Activated T-helper 2 cell treated with anti-CD3 and anti-CD28 coated beads, Interferon-gamma antibody, Interleukin-2, Interleukin-4, amounts not matched to agents 10 μg/mL and 5 μg/mL and 100 μg/mL, durations not matched to agents 14 hours and 24 hours and 36 hours (primary cell): ENCODE measurements at regions of chr11 and their contacts with region 1.

Region 1: GRCh38 chr11:73184953-73185671 is 33.0 kb upstream of the P2RY2 start:
- DNase-seq: peak; percentile 46
- H3K4me3 Mint-ChIP-seq: no peak overlapping the region
- H3K27ac Mint-ChIP-seq: no peak overlapping the region
- H3K4me1 Mint-ChIP-seq: peaks cover 5% of the 10 kb centered on the region
- H3K27me3 Mint-ChIP-seq: peaks cover 21% of the 10 kb centered on the region

Region 2: DNA sequence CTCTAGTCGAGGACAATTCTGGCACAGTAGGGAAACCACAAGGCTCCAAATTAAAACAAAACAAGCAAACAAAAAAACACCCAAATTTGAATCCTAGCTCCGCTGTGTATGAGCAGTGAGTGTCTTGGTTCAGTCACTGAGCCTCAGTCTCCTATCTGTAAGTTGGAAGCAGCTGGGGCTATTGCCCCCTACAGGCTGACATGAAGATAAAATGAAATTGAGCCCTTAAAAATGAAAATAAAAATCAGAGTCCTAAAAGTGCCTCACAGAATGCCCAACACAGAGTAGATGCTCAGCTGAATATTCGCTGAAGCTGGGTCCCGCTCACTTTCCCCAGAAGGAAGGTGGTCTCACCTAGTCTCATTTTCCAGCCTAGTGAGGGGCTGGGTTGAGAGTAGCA is 576.1 kb before region 1 on chr11:
- intact Hi-C with region 1: no loop called
- DNase-seq: no peak
- H3K4me3 Mint-ChIP-seq: no peak overlapping the region
- H3K27ac Mint-ChIP-seq: no peak overlapping the region
- H3K4me1 Mint-ChIP-seq: peaks cover 5% of the 10 kb centered on the region
- H3K27me3 Mint-ChIP-seq: peaks cover 31% of the 10 kb centered on the region

Region 3: DNA sequence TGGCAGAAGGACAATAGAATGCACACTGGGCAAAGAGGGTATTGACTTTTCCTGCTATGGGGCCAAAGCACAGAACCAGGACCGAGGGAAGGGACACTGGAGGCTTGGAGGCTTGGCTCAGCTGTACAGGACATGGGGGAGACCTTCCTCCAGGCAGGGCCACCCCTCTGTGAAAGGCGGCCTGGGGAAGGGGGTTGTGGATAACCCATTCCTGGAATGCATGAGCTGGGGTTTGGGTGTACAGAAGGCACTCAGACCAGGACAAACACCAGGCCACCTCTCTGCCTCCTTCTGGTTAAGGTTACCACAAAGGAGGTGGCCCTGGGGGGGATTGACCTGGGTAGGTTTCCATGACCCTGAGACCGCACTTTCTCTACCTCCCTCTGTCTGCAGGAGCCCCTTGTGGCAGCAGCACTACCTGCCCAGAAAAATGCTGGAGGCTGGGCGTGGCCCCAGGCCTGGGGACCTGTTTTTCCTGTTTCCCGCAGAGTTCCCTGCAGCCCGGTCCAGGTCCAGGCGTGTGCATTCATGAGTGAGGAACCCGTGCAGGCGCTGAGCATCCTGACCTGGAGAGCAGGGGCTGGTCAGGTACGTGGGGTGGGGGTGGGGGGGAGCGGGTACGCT is 42.6 kb after region 1 on chr11:
- intact Hi-C with region 1: no loop called
- DNase-seq: no peak
- H3K4me3 Mint-ChIP-seq: no peak overlapping the region
- H3K27ac Mint-ChIP-seq: no peak overlapping the region
- H3K4me1 Mint-ChIP-seq: peaks cover 3% of the 10 kb centered on the region
- H3K27me3 Mint-ChIP-seq: peaks cover 8% of the 10 kb centered on the region

Region 4: DNA sequence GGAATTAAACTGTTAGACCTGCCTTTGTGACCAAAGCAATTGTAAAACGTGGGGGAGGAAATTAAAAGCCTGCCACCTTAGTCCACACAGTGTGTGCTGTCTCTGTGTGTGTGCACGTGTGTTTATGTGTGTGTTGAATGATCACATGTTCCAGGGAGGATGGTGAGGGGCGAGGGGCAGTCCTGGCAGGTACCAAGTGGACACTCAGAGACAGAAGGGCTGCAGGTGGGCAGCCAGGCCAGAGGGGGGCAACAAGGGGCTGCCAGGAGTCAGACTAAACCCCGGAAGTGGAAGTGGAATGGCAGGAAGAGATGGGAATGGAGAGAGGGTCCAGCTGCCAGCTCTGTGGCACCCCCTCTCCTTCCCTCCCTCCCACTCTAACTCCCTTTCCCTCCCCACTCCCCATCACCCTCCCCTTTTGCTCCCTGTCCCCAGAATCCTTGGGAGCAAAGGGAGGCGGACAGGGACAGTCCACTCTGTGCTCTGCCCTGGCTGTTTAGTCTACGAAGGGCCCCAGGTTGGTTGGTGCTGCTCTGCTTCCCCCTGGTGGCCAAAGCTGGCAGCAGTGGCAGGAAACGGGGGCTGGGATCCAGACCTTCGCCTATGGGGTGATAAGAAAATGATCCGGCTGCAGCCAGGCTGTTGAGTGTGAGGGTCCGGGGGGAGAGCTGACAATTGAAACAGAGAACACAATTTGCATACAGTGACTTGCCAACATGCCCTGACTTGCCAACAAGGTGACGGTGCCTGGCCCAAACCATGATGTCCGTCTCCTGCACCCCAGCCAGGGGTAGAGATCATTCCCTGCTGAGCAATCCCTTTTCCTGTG is 57.4 kb after region 1 on chr11:
- intact Hi-C with region 1: loop called (anchors 2 kb)
- DNase-seq: peak; percentile 55
- H3K4me3 Mint-ChIP-seq: no peak overlapping the region
- H3K27ac Mint-ChIP-seq: no peak overlapping the region
- H3K4me1 Mint-ChIP-seq: no peaks in the 10 kb centered on the region
- H3K27me3 Mint-ChIP-seq: peaks cover 13% of the 10 kb centered on the region

Region 5: GRCh38 chr11:73288873-73289707 is 104.0 kb after region 1 on chr11:
- intact Hi-C with region 1: loop called (anchors 10 kb)
- DNase-seq: peak; percentile 31
- H3K4me3 Mint-ChIP-seq: no peak overlapping the region
- H3K27ac Mint-ChIP-seq: no peak overlapping the region
- H3K4me1 Mint-ChIP-seq: peaks cover 16% of the 10 kb centered on the region
- H3K27me3 Mint-ChIP-seq: peaks cover 14% of the 10 kb centered on the region